ENCODE measurements at regions of chr1 and their contacts with region 1.

Region 1: DNA sequence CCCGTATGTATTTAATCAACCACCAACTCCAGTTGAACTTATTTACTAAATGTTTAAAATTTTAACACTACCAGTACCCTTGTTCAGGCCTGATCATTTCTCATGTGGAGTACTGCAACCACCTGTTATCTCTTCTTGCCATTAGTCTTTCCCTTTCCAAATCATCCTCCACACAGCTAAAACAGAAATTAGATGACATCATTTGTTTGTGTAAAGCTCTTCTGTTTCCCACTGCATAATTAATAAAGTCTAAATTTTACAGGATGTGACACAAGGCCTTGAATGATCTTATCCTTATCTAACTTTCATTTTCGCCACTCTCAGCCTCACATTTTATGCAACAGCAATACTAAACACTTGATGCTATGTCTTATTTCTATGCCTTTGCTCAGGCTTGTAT is 24.4 kb downstream of the GDAP2 start:
- DNase-seq: no peak
- H3K4me3 Mint-ChIP-seq: no peak overlapping the region
- H3K27ac Mint-ChIP-seq: no peak overlapping the region
- H3K4me1 Mint-ChIP-seq: no peaks in the 10 kb centered on the region
- H3K27me3 Mint-ChIP-seq: no peaks in the 10 kb centered on the region

Region 2: DNA sequence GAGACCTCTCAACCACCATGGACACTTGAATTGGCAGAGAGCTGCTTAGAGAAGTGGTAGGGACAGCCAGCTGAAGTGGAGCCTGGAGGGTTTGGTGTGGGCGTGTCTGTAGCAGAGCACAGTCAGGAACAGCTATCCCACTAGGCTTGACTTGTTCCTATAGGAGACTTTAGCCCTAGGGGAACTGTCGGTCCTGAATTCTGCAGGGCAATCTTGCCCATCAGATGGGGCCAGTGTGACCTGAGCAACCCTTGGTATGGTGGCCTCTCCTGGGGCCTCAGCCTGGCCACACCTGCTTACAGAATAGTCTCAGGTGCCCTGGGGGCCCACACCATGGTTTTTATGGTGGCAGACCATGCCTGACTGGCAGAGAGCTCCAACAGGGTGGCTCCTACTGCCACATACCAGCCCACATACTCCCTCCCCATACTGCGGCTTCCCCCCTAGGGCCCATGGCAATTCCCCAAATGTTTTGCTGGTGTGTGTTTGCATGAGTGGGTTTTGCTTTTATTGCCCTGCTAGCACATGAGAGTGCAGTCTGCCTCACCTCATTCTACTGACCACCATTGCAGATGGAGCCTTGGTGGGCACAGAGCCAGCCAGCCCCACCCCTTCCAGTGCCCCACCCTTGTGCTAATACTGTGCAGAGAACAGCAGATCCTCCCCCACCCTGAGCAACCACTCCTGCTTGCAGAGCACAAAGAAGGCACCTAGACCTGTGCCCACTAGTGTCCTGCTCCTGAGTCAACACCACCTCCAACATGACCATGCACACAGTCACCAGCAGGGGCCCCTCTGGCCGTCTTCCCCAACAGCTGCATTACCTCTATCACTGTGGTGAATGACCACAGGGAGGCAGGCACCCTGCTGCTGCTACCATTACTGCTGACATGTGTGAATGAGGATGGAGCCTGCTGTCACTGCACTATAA is 62.5 kb before region 1 on chr1:
- CTCF ChIA-PET with region 1: no interaction called
- intact Hi-C with region 1: loop called (anchors 10 kb)
- DNase-seq: no peak
- H3K4me3 Mint-ChIP-seq: no peak overlapping the region
- H3K27ac Mint-ChIP-seq: no peak overlapping the region
- H3K4me1 Mint-ChIP-seq: no peaks in the 10 kb centered on the region
- H3K27me3 Mint-ChIP-seq: no peaks in the 10 kb centered on the region

Region 3: GRCh38 chr1:118093017-118093416 is 188.0 kb after region 1 on chr1:
- CTCF ChIA-PET with region 1: no interaction called
- intact Hi-C with region 1: no loop called
- DNase-seq: no peak
- H3K4me3 Mint-ChIP-seq: no peak overlapping the region
- H3K27ac Mint-ChIP-seq: no peak overlapping the region
- H3K4me1 Mint-ChIP-seq: no peaks in the 10 kb centered on the region
- H3K27me3 Mint-ChIP-seq: no peaks in the 10 kb centered on the region

Measured in activated naive CD4-positive, alpha-beta T cell treated with anti-CD3 and anti-CD28 coated beads for 36 hours (primary cell).